Dorsolateral prefrontal cortex (tissue), 120 donors: ENCODE measurements at regions of chr4 and their contacts with region 1.

Region 1: DNA sequence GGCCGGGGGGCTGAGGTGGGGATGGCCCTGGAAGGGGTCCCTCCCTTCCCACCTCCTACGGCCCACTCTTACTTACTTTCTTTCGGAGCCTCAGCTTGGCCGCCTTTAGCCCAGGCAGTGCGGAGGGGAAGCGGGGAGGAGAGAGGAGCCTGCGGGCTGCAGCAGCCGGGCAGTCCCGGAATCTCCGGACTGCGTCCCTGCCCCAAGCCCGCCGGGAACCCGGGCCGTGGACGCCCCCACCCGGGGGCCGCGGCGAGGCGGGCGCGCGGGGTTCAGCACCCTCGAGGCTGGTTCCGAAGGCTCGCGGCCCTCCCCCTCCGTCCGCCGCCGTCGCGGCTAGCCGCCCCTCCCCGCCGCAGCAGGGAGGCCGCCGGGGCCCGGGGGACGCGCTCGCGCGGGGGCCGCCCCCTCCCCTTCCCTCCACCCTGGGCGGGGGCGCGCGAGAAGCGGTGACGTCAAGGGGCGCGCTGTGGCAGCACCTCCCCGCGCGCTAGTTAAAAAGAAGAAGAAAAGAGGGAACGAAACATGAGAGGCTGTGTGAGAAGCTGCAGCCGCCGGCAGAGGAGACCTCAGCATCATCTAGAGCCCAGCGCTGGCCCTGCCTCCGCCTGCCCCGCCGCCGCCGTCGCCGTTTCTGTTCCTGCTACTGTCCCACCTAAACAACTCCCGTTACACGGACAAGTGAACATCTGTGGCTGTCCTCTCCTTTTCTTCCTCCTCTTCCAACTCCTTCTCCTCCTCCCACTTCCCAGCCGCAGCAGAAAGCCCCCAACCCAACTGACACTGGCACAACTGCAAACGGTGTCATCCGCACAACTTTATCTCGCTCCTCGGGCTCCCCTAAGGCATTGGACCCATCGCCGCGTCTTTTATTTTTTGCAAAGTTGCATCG is at the start of gene HHIP:
- DNase-seq: peak; percentile 16 to 87 (median 75)
- H3K4me3 ChIP-seq: peak within 1 kb of the TSS; percentile 42 to 85 (median 65)
- H3K27ac ChIP-seq: peak within 1 kb of the TSS in 58 of 59 donors; percentile 6 to 98 (median 88)
- H3K27me3 ChIP-seq: peaks cover 0 to 43% (median 11%) of the 10 kb centered on the region in 45 donors
- CTCF ChIP-seq: peak in 7 of 56 donors; percentile 3 to 19 (median 9)
- total RNA-seq, gene HHIP: 6.0 to 200 (median 41.1) TPM

Region 2: GRCh38 chr4:144583658-144584057 is 62.2 kb before region 1 on chr4:
- intact Hi-C with region 1: loop called in 1 of 2 experiments (anchors 10 kb)
- DNase-seq: no peak
- H3K4me3 ChIP-seq: peak overlapping the region in 16 of 59 donors; percentile 3 to 42 (median 23)
- H3K27ac ChIP-seq: no peak overlapping the region
- H3K27me3 ChIP-seq: no peaks in the 10 kb centered on the region
- CTCF ChIP-seq: no peak

Region 3: GRCh38 chr4:144709793-144710525 is 64.1 kb after region 1 on chr4:
- intact Hi-C with region 1: loop called (anchors 1 to 2 kb)
- DNase-seq: peak in 3 of 10 donors; percentile 14 to 70 (median 47)
- H3K4me3 ChIP-seq: peak overlapping the region in 4 of 59 donors; percentile 1 to 28 (median 8)
- H3K27ac ChIP-seq: peak overlapping the region; percentile 20 to 96 (median 87)
- H3K27me3 ChIP-seq: no peaks in the 10 kb centered on the region
- CTCF ChIP-seq: peak in 3 of 56 donors; percentile 8 to 13 (median 11)

Region 4: DNA sequence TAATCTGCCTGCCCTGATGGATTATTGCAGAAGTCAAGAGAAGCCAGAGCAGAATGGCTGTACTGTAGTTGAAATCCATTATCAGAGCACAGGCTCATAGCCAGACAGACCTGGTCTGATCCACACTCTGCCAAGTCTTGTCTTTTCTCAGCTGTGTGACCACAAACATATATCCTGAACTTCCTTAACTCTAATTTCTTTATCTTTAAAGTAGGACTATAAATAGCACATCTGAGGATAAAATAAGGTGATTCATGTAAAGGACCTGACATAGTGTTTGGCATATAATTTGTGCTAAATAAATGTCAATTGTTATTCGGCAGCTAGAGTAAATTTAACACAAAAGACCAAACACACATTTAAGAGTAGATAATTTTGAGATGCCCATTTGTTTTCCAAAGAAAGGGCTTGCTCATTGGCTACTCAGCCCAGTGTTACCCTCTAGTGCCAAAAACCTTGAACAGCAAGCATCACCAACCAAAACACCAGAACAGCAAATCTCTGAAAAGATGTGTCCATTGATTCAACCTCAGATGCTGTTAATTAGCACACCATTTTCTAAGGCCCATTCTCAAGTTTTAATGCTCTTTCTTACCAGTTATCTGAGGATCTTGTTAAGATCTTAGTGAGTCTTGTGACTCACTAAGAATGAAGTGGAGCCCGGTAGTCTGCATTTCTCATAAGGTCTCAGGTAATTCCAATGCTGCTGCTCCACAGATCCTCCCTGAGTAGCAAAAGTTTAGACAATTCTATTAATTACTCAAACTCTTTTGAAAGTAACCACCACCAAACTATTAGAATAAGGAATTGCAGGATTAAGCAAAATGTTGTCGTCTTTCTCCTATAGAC is 108.9 kb after region 1 on chr4:
- intact Hi-C with region 1: loop called in 1 of 2 experiments (anchors 5 kb)
- DNase-seq: peak in 1 of 10 donors; percentile 15
- H3K4me3 ChIP-seq: no peak overlapping the region
- H3K27ac ChIP-seq: peak overlapping the region in 6 of 59 donors; percentile 4 to 60 (median 20)
- H3K27me3 ChIP-seq: no peaks in the 10 kb centered on the region
- CTCF ChIP-seq: peak in 55 of 56 donors; percentile 24 to 78 (median 58)